ENCODE measurements at regions of chr1 and their contacts with region 1.

Region 1: GRCh38 chr1:116139592-116140134 is 28.5 kb downstream of the MAB21L3 start:
- DNase-seq: no peak
- H3K4me3 ChIP-seq: no peak overlapping the region
- H3K27ac ChIP-seq: no peak overlapping the region
- H3K4me1 ChIP-seq: no peaks in the 10 kb centered on the region
- H3K27me3 ChIP-seq: no peaks in the 10 kb centered on the region
- CTCF ChIP-seq: no peak
- POLR2A ChIP-seq: no peak

Region 2: DNA sequence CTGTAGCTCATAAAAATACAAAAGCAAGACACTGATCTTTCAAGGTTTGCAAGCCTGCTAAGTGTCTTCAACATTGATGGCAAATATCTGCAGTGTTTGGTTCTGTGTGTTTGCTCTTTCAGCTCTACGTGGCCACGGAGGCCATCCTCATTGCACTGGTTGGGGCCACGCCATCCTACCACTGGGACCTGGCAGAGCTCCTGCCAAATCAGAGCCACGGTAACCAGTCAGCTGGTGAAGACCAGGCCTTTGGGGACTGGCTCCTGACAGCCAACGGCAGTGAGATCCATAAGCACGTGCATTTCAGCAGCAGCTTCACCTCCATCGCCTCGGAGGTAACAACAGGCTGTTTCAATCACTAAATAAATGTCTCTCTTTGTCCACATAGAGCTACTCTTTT is 147.8 kb before region 1 on chr1:
- intact Hi-C with region 1: no loop called
- DNase-seq: no peak
- H3K4me3 ChIP-seq: no peak overlapping the region
- H3K27ac ChIP-seq: no peak overlapping the region
- H3K4me1 ChIP-seq: no peaks in the 10 kb centered on the region
- H3K27me3 ChIP-seq: no peaks in the 10 kb centered on the region
- CTCF ChIP-seq: no peak
- POLR2A ChIP-seq: no peak

Region 3: DNA sequence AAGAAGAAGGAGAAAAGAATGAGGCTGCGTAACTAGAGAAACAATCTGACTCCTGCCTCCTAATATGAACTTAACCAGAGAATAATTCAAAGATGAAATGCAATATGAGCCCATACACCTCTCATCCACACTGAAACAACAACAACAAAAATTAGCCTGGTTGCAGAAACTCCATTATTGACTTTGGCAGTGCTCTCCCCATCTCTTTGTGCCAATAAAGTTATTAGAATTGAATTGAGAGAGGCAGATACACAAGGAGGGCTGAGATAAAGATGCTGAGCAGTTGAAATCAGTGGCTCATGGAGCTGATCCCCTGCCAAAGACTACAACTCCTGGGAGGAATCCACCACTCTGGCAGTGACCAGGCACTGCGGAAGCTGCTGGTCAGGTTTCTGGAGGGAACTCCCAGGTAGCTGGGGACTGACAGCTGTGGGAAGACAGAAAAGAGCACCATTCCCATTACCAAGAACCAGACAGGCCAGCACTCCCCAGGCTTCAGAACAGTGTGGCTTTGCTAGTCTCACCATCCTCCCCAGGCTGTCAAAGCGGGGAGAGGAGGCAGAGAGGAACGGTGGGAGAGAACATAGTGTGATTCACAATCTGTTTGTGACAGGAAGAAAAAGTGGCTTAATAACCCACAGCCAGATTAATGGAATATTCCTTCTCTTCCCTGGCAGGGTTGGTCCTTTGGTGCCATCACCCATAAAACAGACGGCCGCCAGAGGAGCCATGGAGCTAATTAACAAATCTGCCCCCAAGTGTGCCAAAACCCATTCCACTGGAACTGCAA is 63.5 kb after region 1 on chr1:
- intact Hi-C with region 1: no loop called
- DNase-seq: no peak
- H3K4me3 ChIP-seq: no peak overlapping the region
- H3K27ac ChIP-seq: no peak overlapping the region
- H3K4me1 ChIP-seq: no peaks in the 10 kb centered on the region
- H3K27me3 ChIP-seq: no peaks in the 10 kb centered on the region
- CTCF ChIP-seq: no peak
- POLR2A ChIP-seq: no peak

Region 4: DNA sequence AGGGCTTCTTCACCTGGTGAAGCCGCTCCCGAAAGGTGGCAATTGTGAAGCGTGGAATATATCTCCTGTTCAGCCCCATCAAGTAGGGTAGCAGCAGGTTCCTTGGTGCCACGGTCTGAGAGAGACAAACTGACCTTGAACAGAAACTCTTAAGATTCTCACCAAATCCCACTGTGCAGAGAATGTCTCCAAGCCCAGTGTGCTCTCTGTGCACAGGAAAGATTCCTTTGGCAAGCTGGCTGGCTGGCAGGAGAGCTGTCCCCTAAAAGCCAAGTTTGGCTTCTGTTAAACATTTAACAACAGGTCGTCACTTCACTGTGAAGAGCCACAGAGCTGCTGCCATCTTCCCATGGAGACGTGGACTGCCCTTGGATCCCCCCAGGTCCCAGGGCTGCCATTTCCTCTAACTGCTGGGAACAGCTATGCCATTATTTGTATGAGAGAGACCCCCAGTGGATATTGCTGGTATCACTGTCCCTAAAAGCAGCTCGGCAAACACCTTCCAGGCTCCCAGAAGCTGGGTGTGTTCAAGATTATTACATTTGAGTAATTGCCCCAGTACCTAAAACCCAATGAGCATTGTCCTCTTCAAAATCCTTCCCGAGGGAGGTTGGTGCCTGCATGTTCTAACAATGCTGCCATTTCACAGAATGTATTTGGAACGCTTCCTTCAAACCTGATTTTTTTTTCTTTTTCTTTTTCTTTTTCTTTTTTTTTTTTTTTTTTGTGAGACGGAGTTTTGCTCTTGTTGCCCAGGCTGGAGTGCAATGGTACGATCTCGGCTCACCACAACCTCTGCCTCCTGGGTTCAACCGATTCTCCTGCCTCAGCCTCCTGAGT is 359.3 kb after region 1 on chr1:
- intact Hi-C with region 1: loop called (anchors 5 kb)
- DNase-seq: peak in 1 of 2 donors; percentile 26
- H3K4me3 ChIP-seq: no peak overlapping the region
- H3K27ac ChIP-seq: no peak overlapping the region
- H3K4me1 ChIP-seq: no peaks in the 10 kb centered on the region
- H3K27me3 ChIP-seq: no peaks in the 10 kb centered on the region
- CTCF ChIP-seq: peak; percentile 37 to 64 (median 61)
- POLR2A ChIP-seq: no peak